K562 (cell line): ENCODE measurements at regions of chr6 and their contacts with region 1.

Region 1: DNA sequence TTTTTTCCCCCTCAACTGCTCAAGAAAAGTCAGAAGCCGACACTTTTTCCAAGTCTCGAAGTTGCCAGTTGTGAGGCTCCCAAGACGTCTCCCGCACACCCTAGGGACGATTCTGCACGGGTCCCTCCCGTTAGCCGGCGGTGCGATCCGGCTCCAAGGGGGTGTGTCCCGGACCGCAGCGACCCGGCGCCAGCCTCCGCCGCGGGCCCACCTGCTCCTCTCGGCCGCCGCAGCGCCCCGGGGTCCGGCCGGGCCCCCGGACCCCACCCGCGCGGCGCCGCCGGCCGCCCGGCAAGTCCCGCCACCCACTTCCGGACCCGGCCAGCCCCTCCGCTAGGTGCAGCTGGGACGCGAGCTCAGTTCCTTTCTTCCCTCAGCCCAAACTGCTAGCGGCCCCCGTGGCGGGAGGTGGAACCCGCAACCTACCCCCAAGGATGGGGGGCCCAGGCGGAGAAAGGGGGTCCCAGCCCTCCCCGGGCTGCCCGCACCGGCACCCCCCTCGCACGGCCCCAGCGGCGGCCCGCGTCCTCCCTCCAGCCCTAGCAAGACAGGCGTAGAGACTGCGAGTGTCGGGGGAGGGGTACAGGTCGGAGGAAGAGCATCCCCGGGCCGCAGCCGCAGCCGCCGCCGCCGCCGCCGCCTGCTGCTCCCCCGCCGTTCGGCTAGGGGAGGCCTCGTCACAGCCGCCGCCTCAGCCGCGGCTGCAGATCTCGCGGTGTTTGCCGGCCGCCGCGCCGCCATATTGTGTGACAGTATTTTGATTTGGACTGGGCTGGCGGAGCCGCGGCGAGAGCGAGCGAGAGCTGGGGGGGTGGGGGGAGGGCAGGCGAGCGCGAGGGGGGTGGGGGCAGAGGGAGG is 485 bp upstream of the TAB2 start:
- DNase-seq: peak; percentile 89 to 97 (median 90)
- ATAC-seq: peak; percentile 92
- H3K4me3 ChIP-seq: peak overlapping the region; percentile 89
- H3K27ac ChIP-seq: peak overlapping the region; percentile 88
- H3K4me1 ChIP-seq: peaks cover 9 to 12% of the 10 kb centered on the region in 2 experiments
- H3K27me3 ChIP-seq: no peaks in the 10 kb centered on the region
- CTCF ChIP-seq: peak in 2 of 3 experiments; percentile 24 to 29; a peak in 3 of 6 replicates
- EP300 ChIP-seq: peak; percentile 5; the same call in 1 of the 2 replicates
- POLR2A ChIP-seq: peak; percentile 89
- RAD21 ChIP-seq: peak; percentile 31 to 44

Region 2: GRCh38 chr6:149140137-149140909 is 176.7 kb before region 1 on chr6:
- CTCF ChIA-PET with region 1: no interaction called
- POLR2A ChIA-PET with region 1: interaction called, 3 read pairs
- in situ Hi-C with region 1: no loop called
- intact Hi-C with region 1: loop called (anchors 5 kb)
- DNase-seq: peak; percentile 32 to 86 (median 55)
- ATAC-seq: peak; percentile 91
- H3K4me3 ChIP-seq: 0 out of 2 replicates have a peak overlapping the region, but pooled peaks have one; percentile 1
- H3K27ac ChIP-seq: peak overlapping the region; percentile 78
- H3K4me1 ChIP-seq: peaks cover 11 to 28% of the 10 kb centered on the region in 2 experiments
- H3K27me3 ChIP-seq: no peaks in the 10 kb centered on the region
- CTCF ChIP-seq: no peak
- EP300 ChIP-seq: peak; percentile 95
- POLR2A ChIP-seq: no peak
- RAD21 ChIP-seq: no peak; a peak in 1 of 4 replicates

Region 3: DNA sequence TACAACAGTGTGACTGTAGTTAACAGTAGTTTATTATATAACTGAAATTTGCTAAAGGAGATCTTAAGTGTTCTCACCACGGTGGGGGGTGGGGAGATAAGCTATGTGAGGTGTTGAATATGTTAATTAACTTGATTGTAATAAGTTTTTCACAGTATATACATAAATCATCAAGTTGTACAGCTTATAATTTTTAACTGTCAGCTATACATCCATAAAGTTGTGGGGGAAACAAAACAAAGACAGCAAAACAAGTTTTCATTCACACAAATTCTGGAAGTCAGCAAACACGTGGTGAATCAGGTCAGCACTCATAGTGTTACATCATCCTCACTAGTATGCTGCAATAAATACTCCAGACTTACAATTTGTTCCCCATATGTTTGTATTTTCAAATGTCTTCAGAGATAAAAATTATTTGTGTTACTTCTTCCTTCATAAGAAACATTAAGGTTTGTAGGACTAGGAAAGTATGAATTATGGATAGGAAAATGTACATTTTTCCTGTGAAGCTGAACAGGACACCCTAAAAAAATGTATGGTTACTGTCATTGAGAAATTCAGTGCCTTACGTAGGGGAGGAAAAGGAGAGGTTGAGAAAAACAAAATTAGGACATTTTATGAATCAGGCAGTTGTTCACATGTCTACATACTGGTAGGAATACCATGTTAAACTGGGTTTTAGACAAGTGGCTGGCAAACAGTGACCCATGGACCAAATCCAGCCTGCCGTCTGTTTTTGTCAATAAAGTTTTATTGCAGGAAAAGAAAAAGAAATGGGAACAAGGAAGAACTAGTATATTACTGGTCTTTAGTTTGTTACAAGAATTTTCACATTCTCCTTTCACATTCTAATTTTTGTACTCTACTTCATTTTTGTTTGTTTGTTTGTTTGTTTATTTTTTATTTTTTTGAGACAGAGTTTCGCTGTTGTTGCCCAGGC is 89.1 kb after region 1 on chr6:
- CTCF ChIA-PET with region 1: no interaction called
- POLR2A ChIA-PET with region 1: no interaction called
- in situ Hi-C with region 1: no loop called
- intact Hi-C with region 1: loop called (anchors 5 kb)
- DNase-seq: no peak
- ATAC-seq: peak; percentile 76
- H3K4me3 ChIP-seq: no peak overlapping the region
- H3K27ac ChIP-seq: peak overlapping the region; percentile 30; the same call in 2 of the 3 replicates
- H3K4me1 ChIP-seq: no peaks in the 10 kb centered on the region
- H3K27me3 ChIP-seq: no peaks in the 10 kb centered on the region
- CTCF ChIP-seq: no peak
- EP300 ChIP-seq: no peak
- POLR2A ChIP-seq: no peak
- RAD21 ChIP-seq: no peak